ENCODE measurements at regions of chr9 and their contacts with region 1.

Region 1: DNA sequence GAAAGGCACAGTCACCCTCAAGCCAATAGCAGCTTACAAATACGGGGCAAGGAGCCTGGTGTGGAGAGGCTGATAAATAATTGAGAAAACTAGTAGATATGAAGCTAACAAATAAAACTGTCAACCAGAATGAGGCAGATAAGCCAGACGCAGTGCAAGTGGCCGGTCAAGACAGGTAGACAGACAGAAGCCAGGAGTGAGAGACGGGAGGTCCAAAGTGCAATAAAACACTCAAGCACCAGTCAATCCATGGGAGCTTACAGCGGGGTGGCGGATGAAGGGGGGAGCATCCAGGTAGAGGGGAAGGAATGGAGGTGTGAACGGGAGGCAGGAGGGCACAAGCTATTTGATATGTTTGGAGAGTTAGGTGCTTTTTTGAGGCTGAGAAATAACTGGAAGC is 193.1 kb downstream of the FOXD4L6 start:
- DNase-seq: no peak
- ATAC-seq: no peak
- H3K4me3 ChIP-seq: no peak overlapping the region
- H3K4me3 Mint-ChIP-seq: no peak overlapping the region
- H3K27ac ChIP-seq: no peak overlapping the region
- H3K27ac Mint-ChIP-seq: no peak overlapping the region
- H3K4me1 ChIP-seq: no peaks in the 10 kb centered on the region
- H3K4me1 Mint-ChIP-seq: no peaks in the 10 kb centered on the region
- H3K27me3 ChIP-seq: no peaks in the 10 kb centered on the region
- H3K27me3 Mint-ChIP-seq: no peaks in the 10 kb centered on the region
- CTCF ChIP-seq: no peak

Region 2: GRCh38 chr9:40884072-40884901 is 51.0 kb before region 1 on chr9:
- CTCF ChIA-PET with region 1: no interaction called
- POLR2A ChIA-PET with region 1: no interaction called
- intact Hi-C with region 1: loop called in 1 of 2 experiments (anchors 10 kb)
- DNase-seq: peak in 1 of 9 experiments; percentile 47
- ATAC-seq: no peak
- H3K4me3 ChIP-seq: no peak overlapping the region
- H3K4me3 Mint-ChIP-seq: no peak overlapping the region
- H3K27ac ChIP-seq: no peak overlapping the region
- H3K27ac Mint-ChIP-seq: no peak overlapping the region
- H3K4me1 ChIP-seq: no peaks in the 10 kb centered on the region
- H3K4me1 Mint-ChIP-seq: no peaks in the 10 kb centered on the region
- H3K27me3 ChIP-seq: no peaks in the 10 kb centered on the region
- H3K27me3 Mint-ChIP-seq: no peaks in the 10 kb centered on the region
- CTCF ChIP-seq: no peak

Region 3: DNA sequence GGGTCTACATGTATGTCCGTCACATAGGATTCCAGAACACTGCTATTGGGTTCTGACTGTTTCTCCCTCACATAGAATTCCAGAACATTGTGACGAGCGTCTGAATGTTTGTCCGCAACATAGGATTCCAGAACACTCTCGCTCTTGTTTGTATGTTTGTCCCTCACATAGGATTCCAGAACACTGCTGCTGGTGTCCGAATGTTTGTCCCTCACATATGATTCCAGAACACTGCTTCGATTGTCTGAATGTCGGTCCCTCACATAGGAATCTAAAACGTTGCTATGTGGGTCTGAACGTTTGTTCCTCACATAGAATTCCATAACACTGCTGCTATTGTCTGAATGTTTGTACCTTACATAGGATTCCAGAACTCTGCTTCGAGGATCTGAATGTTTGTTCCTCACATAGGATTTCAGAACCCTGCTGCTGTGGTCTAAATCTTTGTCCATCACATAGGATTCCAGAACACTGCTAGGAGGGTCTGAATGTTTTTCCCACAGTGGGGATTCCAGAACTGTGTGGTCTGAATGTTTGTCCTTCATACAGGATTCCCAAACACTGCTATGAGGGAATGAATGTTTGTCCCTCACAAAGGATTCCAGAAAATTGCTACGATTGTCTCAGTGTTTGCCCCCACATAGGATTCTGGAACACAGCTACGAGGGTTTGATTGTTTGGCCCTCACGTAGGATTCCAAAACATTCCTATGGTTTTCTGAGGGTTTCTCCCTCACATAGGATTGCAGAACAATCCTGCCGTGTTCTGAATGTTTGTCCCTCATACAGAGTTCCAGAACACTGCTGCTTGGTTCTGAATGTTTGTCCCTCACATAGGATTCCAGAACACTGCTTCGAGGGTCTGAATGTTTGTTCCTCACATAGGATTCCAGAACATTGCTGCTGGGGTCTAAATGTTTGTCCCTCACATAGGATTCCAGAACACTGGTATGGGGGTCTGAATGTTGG is 27.4 kb before region 1 on chr9:
- CTCF ChIA-PET with region 1: no interaction called
- POLR2A ChIA-PET with region 1: no interaction called
- intact Hi-C with region 1: no loop called
- DNase-seq: peak in 1 of 9 experiments; percentile 38
- ATAC-seq: no peak
- H3K4me3 ChIP-seq: no peak overlapping the region
- H3K4me3 Mint-ChIP-seq: no peak overlapping the region
- H3K27ac ChIP-seq: no peak overlapping the region
- H3K27ac Mint-ChIP-seq: no peak overlapping the region
- H3K4me1 ChIP-seq: no peaks in the 10 kb centered on the region
- H3K4me1 Mint-ChIP-seq: no peaks in the 10 kb centered on the region
- H3K27me3 ChIP-seq: no peaks in the 10 kb centered on the region
- H3K27me3 Mint-ChIP-seq: peaks cover 2% of the 10 kb centered on the region
- CTCF ChIP-seq: no peak